GM13976 (cell line): ENCODE measurements at regions of chr20 and their contacts with region 1.

Region 1: GRCh38 chr20:53738039-53738944 is 144.7 kb upstream of the ZNF217 start:
- DNase-seq: no peak
- CTCF ChIP-seq: no peak

Region 2: DNA sequence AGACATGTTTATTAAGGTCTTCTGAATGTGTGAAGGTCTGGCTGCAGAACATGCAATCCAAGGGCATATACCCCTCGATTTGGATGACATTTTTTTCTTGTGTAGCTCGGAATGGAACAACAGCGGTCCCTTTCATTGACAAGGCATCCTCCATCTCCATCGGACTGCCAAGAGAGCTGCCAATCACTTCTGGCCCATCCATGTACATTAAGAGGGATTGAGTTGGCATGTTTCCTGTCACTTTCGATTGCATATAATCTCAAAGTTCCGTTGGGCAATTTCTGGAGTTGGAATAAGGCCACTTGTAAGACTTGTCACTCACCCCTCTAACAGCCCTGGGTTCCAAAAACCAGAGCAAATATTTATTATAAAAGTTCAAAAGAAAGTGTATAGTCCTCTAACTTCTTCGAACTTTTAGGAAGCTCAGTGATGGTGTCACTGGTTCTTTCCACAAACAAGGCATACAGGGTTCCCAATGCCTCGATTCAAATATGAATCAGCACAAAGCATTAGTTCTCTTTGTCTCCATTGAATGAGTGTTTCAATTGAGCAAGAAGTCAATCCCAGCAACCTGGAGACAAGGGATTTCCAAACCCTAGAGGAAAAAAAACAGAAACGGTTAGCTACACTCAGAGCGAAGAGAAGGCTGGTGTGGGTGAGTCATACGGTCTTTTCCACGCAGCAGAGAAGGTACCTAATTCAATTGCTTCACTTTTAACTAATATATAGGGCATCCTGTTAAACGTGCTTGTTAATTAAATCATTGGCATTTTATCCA is 155.5 kb before region 1 on chr20:
- in situ Hi-C with region 1: loop called (anchors 10 kb)
- DNase-seq: no peak
- CTCF ChIP-seq: no peak

Region 3: GRCh38 chr20:53706466-53707370 is 31.6 kb before region 1 on chr20:
- in situ Hi-C with region 1: no loop called
- DNase-seq: peak; percentile 55
- CTCF ChIP-seq: no peak

Region 4: GRCh38 chr20:53926428-53927028 is 188.2 kb after region 1 on chr20:
- in situ Hi-C with region 1: loop called (anchors 10 kb)
- DNase-seq: peak; percentile 58
- CTCF ChIP-seq: no peak